HEK293 (cell line): ENCODE measurements at regions of chrX and their contacts with region 1.

Region 1: DNA sequence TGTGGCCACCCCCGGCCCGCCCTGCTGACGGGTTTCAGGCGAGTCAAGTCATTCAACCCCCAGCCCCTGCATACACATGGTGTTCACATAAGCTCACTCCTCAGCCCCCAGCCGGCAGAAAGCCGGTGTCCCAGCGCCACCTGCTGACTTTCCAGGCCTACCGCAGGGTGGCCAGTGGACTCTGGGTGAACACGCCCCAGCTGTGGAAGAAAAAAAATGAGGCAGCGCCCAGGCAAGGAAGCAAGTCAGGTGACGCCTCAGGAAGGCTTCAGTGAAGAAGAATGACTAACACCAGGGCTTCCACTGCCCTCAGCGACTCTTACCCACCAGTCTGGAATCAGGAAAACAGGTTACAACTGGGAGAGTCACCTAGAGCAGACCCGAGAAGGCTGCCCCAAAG is 15.8 kb downstream of the BCAP31 start:
- H3K4me3 ChIP-seq: no peak overlapping the region
- H3K27ac ChIP-seq: no peak overlapping the region
- H3K4me1 ChIP-seq: no peaks in the 10 kb centered on the region
- CTCF ChIP-seq: peak; percentile 85

Region 2: DNA sequence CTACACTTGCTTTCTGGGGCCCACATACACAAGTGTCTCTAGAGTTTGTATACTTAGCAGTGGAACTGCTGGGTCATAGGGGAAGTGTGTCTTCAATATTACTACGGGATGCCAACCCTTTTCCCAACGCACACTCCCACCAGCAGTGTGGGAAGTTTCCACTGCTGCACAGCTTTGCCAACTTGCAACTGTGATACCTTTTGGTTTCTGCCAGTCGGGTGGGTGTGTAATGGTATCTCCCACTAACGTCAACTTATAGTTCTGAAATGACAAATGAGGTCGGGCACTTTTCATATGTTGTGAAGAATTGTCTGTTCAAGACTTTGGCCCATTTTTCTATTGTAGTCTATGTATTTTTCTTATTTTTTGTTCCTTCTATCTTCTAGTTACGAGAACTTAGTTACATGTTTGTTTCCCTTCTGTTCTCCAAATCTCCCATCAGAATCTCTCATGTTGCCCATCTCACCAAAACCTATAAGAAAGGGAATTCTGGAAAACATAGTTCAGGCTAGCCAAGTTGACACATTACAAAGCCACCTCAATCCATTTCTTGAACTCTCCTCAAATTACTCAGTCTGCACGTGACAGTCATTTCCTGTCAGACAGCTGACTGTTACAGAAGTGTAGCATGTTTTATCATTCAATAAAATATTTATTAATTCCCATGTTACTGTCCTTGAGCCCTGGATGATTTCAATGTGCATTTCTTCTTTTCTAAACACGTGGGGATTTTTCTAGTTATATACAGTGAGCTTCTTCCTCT is 337.9 kb before region 1 on chrX:
- CTCF ChIA-PET with region 1: no interaction called
- POLR2A ChIA-PET with region 1: no interaction called
- H3K4me3 ChIP-seq: no peak overlapping the region
- H3K27ac ChIP-seq: no peak overlapping the region
- H3K4me1 ChIP-seq: no peaks in the 10 kb centered on the region
- CTCF ChIP-seq: no peak

Region 3: GRCh38 chrX:153539171-153539978 is 169.0 kb before region 1 on chrX:
- CTCF ChIA-PET with region 1: interaction called, 19 read pairs
- POLR2A ChIA-PET with region 1: no interaction called
- H3K4me3 ChIP-seq: no peak overlapping the region
- H3K27ac ChIP-seq: no peak overlapping the region
- H3K4me1 ChIP-seq: no peaks in the 10 kb centered on the region
- CTCF ChIP-seq: peak; percentile 99

Region 4: GRCh38 chrX:153554519-153555167 is 153.8 kb before region 1 on chrX:
- CTCF ChIA-PET with region 1: interaction called, 23 read pairs
- POLR2A ChIA-PET with region 1: no interaction called
- H3K4me3 ChIP-seq: no peak overlapping the region
- H3K27ac ChIP-seq: no peak overlapping the region
- H3K4me1 ChIP-seq: no peaks in the 10 kb centered on the region
- CTCF ChIP-seq: peak; percentile 78

Region 5: GRCh38 chrX:153598541-153599191 is 109.7 kb before region 1 on chrX and contains the start of gene CCNQ:
- CTCF ChIA-PET with region 1: no interaction called
- POLR2A ChIA-PET with region 1: no interaction called
- H3K4me3 ChIP-seq: peak within 1 kb of the TSS; percentile 63
- H3K27ac ChIP-seq: peak within 1 kb of the TSS; percentile 65; the same call in 1 of the 2 replicates
- H3K4me1 ChIP-seq: no peaks in the 10 kb centered on the region
- CTCF ChIP-seq: no peak

Region 6: GRCh38 chrX:153719238-153719637 is 10.8 kb after region 1 on chrX:
- CTCF ChIA-PET with region 1: interaction called, 14 read pairs
- POLR2A ChIA-PET with region 1: interaction called, 5 read pairs
- H3K4me3 ChIP-seq: no peak overlapping the region
- H3K27ac ChIP-seq: no peak overlapping the region
- H3K4me1 ChIP-seq: peaks cover 3% of the 10 kb centered on the region
- CTCF ChIP-seq: no peak